ENCODE measurements at regions of chr7 and their contacts with region 1.

Region 1: DNA sequence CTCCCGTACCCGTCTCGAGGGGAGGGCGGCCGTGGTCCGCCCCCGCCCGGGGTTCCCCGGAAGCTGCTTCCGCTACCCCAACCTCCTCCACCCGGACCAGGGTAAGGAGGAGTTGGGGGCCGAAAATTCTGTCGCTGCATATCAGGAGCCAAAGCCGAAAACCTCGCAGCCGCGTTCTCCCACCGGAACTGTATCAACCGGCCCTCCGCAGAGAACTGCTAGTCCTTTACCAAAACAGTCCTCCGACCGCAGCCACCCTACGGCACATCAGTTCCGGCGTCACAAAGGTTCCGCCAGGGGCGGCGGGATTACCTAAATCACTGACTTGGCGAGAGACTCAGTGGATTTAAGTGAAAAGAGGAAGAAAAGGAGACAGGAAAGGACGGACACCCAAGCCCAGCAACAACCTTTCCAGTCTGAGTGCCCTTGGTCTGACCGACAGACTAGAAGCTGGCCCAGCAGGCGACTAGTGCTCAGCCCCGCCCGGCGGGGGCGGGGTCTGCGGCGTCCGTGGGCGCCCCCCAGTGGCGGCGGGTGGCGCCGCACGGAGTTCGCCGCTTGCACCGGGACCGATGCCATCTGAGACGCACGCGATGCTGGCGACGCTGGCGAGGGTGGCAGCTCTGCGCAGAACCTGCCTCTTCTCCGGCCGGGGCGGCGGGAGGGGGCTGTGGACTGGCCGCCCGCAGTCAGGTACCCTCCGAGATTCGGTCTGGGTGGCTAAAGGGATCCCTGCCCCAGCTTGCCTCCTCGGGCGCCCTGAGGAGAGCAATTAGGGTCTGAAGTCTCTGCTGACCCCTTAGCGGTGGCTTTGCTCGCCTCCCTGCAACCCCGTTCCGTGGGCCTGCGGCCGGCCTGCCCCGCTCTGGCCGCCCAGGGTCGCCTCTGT is at the starts of genes MPLKIP and SUGCT:
- H3K4me3 Mint-ChIP-seq: peak within 1 kb of the TSS; percentile 86
- H3K27ac Mint-ChIP-seq: peak within 1 kb of the TSS; percentile 96
- H3K4me1 Mint-ChIP-seq: peaks cover 20% of the 10 kb centered on the region
- H3K27me3 Mint-ChIP-seq: peaks cover 27% of the 10 kb centered on the region

Region 2: DNA sequence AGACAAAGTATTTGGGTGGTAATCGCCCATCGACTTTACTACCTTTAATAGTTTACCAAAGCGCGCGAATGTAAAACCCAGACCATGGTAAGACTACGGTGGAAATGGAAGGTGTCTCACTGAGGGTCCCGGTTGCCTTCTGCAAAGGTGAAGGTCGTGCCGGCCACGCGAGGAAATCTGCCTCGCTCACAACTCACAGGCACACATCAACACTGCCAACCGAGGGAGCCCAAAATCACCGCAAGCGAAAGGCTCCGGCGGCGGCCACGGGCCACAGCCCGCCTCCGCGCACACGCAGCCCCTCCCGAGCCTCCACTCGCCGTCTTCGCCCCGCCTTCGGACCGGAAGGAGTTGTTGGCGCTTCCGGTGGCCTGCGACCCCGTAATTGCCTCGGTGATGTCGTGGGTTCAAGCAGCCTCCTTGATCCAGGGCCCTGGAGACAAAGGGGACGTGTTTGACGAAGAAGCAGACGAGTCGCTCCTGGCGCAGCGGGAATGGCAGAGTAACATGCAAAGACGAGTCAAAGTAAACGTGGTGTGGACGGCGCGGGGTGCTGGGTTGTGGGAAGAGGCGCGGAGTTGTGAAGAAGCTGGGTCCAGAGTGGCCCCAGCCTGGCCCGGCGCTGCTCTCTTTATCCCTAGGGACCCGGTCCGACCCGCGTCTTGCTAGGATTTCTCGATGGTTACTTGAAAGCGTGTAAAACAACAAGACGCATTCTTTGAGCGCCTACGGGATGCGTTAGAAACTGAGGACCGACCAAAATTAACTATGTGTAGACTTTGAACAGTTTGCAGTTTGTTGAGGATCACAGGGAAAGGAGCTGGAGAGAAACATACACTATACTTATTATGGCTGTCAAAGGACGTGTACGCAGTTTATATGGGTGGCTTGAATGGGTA is 568.4 kb before region 1 on chr7 and contains the start of gene YAE1:
- intact Hi-C with region 1: loop called (anchors 5 kb)
- H3K4me3 Mint-ChIP-seq: peak within 1 kb of the TSS; percentile 99
- H3K27ac Mint-ChIP-seq: peak within 1 kb of the TSS; percentile 81
- H3K4me1 Mint-ChIP-seq: peaks cover 10% of the 10 kb centered on the region
- H3K27me3 Mint-ChIP-seq: peaks cover under 1% of the 10 kb centered on the region

Measured in dendritic cell treated with granulocyte-macrophage colony-stimulating factor and Interleukin-4, amounts not matched to agents 40 ng/mL and 50 ng/mL, for 4 days (primary cell).